ENCODE measurements at regions of chr1 and their contacts with region 1.

Region 1: DNA sequence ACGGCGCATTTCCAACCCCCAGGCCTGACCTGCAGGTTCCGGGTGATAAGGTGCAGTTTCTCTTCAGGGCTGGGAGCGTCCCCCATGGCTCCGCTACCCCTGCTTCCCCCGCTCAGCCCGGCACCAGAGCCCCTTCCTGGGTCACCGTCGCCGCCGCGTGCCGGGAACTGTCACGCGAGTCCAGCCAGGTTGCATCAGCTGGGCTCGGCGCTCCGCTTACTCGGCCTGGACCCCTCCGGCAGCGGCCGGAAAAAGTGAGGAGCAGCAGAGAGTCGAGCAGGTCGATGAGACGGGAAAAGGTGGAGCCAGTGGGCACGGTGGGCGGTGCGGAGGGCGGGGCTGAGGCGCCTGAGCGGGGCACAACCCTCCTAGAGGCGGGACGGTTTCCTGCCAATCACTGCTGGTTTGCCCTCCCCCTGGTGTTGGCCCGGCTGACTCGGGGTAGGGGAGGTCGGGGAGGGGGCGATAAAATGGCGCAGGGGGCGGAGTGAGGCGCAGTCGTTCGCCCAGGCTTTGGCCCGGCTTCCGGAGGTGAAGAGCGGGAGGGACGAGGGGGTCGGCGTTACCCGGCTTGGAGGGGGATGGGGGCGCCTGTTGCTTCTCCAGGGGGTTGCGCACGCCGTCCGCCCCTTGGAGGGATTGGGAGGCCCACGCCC is at the starts of genes S100PBP and YARS1:
- DNase-seq: peak; percentile 98
- ATAC-seq: peak; percentile 95
- H3K4me3 ChIP-seq: peak within 1 kb of the TSS; percentile 65 to 97 (median 95)
- H3K4me3 Mint-ChIP-seq: peak within 1 kb of the TSS; percentile 98
- H3K27ac ChIP-seq: peak within 1 kb of the TSS; percentile 78 to 88
- H3K27ac Mint-ChIP-seq: peak within 1 kb of the TSS; percentile 99
- H3K4me1 ChIP-seq: peaks cover 36 to 57% of the 10 kb centered on the region in 2 donors
- H3K4me1 Mint-ChIP-seq: peaks cover 55% of the 10 kb centered on the region
- H3K27me3 ChIP-seq: no peaks in the 10 kb centered on the region
- H3K27me3 Mint-ChIP-seq: no peaks in the 10 kb centered on the region
- CTCF ChIP-seq: no peak
- total RNA-seq, gene S100PBP: 94.1 and 105 TPM in 2 replicates
- total RNA-seq, gene YARS1: 70.7 and 73.2 TPM in 2 replicates

Region 2: GRCh38 chr1:32107742-32108661 is 709.3 kb before region 1 on chr1 and contains the start of gene KPNA6:
- CTCF ChIA-PET with region 1: no interaction called
- POLR2A ChIA-PET with region 1: no interaction called
- intact Hi-C with region 1: loop called (anchors 10 kb)
- DNase-seq: peak; percentile 96
- ATAC-seq: peak; percentile 83
- H3K4me3 ChIP-seq: peak within 1 kb of the TSS; percentile 86 to 99 (median 93)
- H3K4me3 Mint-ChIP-seq: peak within 1 kb of the TSS; percentile 100
- H3K27ac ChIP-seq: peak within 1 kb of the TSS; percentile 86 to 88
- H3K27ac Mint-ChIP-seq: peak within 1 kb of the TSS; percentile 100
- H3K4me1 ChIP-seq: peaks cover 33 to 44% of the 10 kb centered on the region in 2 donors
- H3K4me1 Mint-ChIP-seq: peaks cover 44% of the 10 kb centered on the region
- H3K27me3 ChIP-seq: no peaks in the 10 kb centered on the region
- H3K27me3 Mint-ChIP-seq: no peaks in the 10 kb centered on the region
- CTCF ChIP-seq: no peak
- total RNA-seq, gene KPNA6: 49.9 and 54.8 TPM in 2 replicates

Region 3: GRCh38 chr1:32644426-32644825 is 172.9 kb before region 1 on chr1:
- CTCF ChIA-PET with region 1: no interaction called
- POLR2A ChIA-PET with region 1: interaction called, 18 read pairs
- intact Hi-C with region 1: no loop called
- DNase-seq: no peak
- ATAC-seq: no peak
- H3K4me3 ChIP-seq: no peak overlapping the region
- H3K4me3 Mint-ChIP-seq: no peak overlapping the region
- H3K27ac ChIP-seq: no peak overlapping the region
- H3K27ac Mint-ChIP-seq: no peak overlapping the region
- H3K4me1 ChIP-seq: peaks cover 9 to 11% of the 10 kb centered on the region in 2 donors
- H3K4me1 Mint-ChIP-seq: peaks cover 14% of the 10 kb centered on the region
- H3K27me3 ChIP-seq: no peaks in the 10 kb centered on the region
- H3K27me3 Mint-ChIP-seq: no peaks in the 10 kb centered on the region
- CTCF ChIP-seq: no peak

Region 4: DNA sequence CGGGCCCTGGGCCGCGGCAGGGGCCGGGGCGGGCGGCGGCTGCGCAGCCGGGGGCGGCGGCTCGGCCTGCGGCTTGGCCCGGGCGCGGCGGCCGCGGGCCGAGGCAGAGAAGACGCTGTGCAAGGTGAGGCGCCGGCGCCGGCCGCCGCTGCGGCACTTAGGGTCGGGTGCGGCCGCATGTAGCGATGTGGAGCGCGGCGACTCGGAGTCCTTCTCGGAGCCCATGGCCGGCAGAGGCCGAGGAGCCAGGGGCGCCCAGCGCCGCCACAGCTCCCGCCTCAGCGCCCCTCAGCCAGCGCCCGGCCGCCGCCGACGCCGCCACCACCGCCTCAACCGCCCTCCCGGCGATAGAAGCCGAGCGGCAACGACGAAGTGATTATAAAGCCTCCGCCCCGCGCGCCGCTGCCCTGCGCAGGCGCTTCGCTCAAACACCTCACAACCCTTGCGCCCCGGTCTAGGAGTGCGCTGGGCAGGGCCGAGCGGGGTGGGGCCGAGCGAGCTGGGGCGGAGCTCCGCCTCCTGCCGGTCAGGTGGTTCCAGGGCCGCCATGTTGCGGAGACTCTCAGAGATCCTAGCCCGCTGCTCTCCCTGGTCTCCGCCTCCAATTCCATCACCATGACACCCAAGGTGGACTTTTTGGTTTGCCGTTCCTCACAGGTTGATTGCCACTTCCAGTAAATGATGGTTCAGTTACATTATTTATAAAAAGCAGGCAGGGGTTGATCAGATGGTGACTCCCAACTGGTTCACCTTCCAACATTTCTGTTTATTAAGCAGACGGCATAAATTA is 147.4 kb after region 1 on chr1 and contains the start of gene RNF19B:
- CTCF ChIA-PET with region 1: no interaction called
- POLR2A ChIA-PET with region 1: no interaction called
- intact Hi-C with region 1: loop called (anchors 5 kb)
- DNase-seq: peak; percentile 97
- ATAC-seq: peak; percentile 90
- H3K4me3 ChIP-seq: peak within 1 kb of the TSS; percentile 51 to 94 (median 68)
- H3K4me3 Mint-ChIP-seq: peak within 1 kb of the TSS; percentile 91
- H3K27ac ChIP-seq: peak within 1 kb of the TSS; percentile 76 to 84
- H3K27ac Mint-ChIP-seq: peak within 1 kb of the TSS; percentile 93
- H3K4me1 ChIP-seq: peaks cover 30 to 35% of the 10 kb centered on the region in 2 donors
- H3K4me1 Mint-ChIP-seq: peaks cover 36% of the 10 kb centered on the region
- H3K27me3 ChIP-seq: no peaks in the 10 kb centered on the region
- H3K27me3 Mint-ChIP-seq: no peaks in the 10 kb centered on the region
- CTCF ChIP-seq: no peak
- total RNA-seq, gene RNF19B: 38.4 and 40.3 TPM in 2 replicates

Region 5: DNA sequence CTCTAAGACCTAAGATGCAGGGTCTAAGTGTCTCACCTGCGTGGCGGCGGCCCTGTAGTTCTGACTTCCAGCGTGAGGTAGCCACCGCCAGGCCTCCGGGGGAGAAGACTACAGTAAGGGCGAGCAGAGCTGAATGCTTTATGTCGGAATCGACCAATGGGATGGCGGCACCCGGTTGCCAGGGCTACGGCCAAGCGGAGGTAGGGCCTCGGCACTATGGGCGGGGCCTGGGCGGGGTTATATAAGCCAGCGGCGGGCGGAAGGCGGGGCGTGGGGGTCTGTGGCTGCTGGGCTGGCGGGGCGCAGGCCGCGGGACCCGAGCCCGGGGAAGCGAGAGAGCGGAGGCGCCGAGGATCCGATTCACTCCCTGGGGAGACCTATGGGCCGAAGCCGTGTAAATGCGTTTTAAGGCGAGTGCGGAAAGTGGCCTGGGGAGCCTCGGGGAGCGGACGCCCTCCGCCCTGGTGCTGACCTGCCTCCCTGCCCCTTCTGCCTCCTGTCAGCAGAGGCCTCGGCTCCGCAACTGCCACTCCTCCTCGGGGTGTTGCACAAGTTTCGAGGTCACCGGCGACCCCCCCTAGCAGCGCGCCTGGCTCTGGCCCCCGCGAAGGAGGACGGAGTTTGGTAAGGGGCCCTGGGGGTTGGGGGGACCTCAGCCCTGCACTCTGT is 263.7 kb after region 1 on chr1 and contains the start of gene AZIN2:
- CTCF ChIA-PET with region 1: no interaction called
- POLR2A ChIA-PET with region 1: no interaction called
- intact Hi-C with region 1: loop called (anchors 1 kb)
- DNase-seq: peak; percentile 94
- ATAC-seq: peak; percentile 99
- H3K4me3 ChIP-seq: peak within 1 kb of the TSS; percentile 50 to 73 (median 63)
- H3K4me3 Mint-ChIP-seq: peak within 1 kb of the TSS; percentile 85
- H3K27ac ChIP-seq: no peak within 1 kb of the TSS
- H3K27ac Mint-ChIP-seq: peak within 1 kb of the TSS; percentile 47
- H3K4me1 ChIP-seq: peaks cover 14 to 19% of the 10 kb centered on the region in 2 donors
- H3K4me1 Mint-ChIP-seq: peaks cover 21% of the 10 kb centered on the region
- H3K27me3 ChIP-seq: peaks cover 0 to 12% (median 4%) of the 10 kb centered on the region in 4 experiments
- H3K27me3 Mint-ChIP-seq: peaks cover 7% of the 10 kb centered on the region
- CTCF ChIP-seq: no peak
- total RNA-seq, gene AZIN2: 5.4 and 5.9 TPM in 2 replicates

Region 6: GRCh38 chr1:33349778-33350610 is 532.7 kb after region 1 on chr1:
- CTCF ChIA-PET with region 1: no interaction called
- POLR2A ChIA-PET with region 1: no interaction called
- intact Hi-C with region 1: loop called (anchors 5 kb)
- DNase-seq: peak; percentile 88
- ATAC-seq: peak; percentile 86
- H3K4me3 ChIP-seq: peak overlapping the region; percentile 45 to 76 (median 74)
- H3K4me3 Mint-ChIP-seq: peak overlapping the region; percentile 98
- H3K27ac ChIP-seq: peak overlapping the region; percentile 71 to 81
- H3K27ac Mint-ChIP-seq: peak overlapping the region; percentile 90
- H3K4me1 ChIP-seq: peaks cover 16 to 20% of the 10 kb centered on the region in 2 donors
- H3K4me1 Mint-ChIP-seq: peaks cover 36% of the 10 kb centered on the region
- H3K27me3 ChIP-seq: peaks cover 0 to 3% (median 0%) of the 10 kb centered on the region in 4 experiments
- H3K27me3 Mint-ChIP-seq: no peaks in the 10 kb centered on the region
- CTCF ChIP-seq: no peak

Measured in B cell (primary cell).